ENCODE measurements at regions of chr15 and their contacts with region 1.

Region 1: GRCh38 chr15:51536965-51537574 is 85.5 kb downstream of the DMXL2 start:
- DNase-seq: no peak
- H3K4me3 ChIP-seq: no peak overlapping the region
- H3K27ac ChIP-seq: no peak overlapping the region
- H3K4me1 ChIP-seq: no peaks in the 10 kb centered on the region
- H3K27me3 ChIP-seq: no peaks in the 10 kb centered on the region
- CTCF ChIP-seq: peak; percentile 27 to 47 (median 37)
- EP300 ChIP-seq: no peak
- POLR2A ChIP-seq: no peak

Region 2: DNA sequence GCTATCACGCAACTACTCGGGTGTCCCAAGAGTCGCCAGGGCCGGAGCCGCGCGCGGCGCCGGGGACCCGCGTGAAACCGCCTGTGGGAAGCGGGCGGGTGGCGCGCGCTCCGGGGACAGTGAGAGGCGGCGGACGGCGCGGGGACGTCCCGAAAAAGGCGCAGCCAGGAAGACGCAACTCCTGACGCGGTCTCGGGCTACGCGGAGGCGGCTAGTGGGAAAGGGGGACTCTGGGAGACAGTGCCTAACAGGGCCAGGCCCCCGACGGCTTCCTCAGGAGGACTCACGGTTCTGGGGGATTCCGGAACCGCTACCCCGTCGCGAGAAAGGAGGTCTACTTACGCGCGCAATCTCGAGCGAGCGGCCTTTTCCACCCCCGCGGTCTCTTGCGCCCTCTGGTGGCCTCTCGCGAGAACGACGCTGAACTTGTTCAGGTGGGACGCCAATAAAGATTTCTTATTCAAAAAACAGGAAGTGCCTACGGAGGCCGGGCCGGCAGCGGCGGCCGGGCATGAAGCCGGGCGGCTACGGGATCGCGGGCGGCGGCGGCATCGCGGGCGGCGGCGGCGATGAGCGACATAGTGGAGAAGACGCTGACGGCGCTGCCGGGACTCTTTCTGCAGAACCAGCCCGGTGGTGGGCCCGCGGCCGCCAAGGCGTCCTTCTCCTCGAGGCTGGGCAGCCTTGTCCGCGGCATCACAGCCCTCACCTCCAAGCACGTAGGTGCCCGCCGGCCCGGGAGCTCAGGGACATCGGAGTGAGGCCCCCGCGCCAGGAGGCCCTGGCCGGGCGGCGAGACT is 628.7 kb before region 1 on chr15 and contains the start of gene AP4E1:
- intact Hi-C with region 1: no loop called
- DNase-seq: peak; percentile 99
- H3K4me3 ChIP-seq: peak within 1 kb of the TSS; percentile 76 to 99 (median 96)
- H3K27ac ChIP-seq: peak within 1 kb of the TSS; percentile 90 to 95 (median 92)
- H3K4me1 ChIP-seq: peaks cover 33 to 36% (median 34%) of the 10 kb centered on the region in 4 donors
- H3K27me3 ChIP-seq: no peaks in the 10 kb centered on the region
- CTCF ChIP-seq: peak; percentile 96 to 99 (median 96)
- EP300 ChIP-seq: no peak
- POLR2A ChIP-seq: peak; percentile 35
- total RNA-seq, gene AP4E1: 9.9 to 13.2 (median 10.6) TPM

Region 3: DNA sequence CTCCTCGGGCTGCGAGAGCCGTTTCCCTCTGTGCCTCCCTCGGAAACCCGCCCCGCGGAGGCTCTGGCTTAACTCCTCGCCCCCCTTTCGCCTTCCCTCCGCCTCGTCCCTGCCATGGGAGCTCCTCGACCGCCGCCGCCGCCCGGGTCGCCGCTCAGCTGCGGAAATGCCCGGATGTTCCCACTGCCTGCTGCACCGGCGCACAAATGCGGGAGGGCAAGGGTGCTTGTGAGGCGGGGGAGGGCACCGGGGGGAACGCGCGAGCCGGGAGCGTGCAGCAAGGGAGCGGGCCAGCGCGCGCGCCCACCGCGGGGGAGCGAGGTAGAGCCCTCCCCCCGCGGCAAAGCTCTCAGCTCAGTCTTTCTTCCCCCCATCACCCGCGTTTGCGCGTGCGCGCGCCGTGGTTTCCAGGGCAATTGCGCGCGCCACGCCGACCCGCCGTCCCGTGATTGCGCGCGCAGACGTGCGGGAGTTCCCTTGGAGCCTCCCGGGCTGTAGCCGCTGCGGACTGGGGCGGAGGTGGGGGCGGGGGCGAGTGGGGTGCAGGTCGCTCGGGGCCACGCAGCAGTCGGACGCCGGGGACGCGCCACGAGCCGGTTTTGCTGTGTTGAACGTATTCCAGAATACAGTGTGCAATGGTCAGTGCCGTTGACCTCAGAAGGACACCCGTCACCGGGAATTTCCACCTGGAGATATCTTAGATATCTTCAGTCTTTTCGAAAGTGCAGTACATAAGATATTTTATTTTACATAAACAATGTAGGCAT is 85.7 kb after region 1 on chr15 and contains the start of gene DMXL2:
- intact Hi-C with region 1: loop called (anchors 5 kb)
- DNase-seq: peak; percentile 93
- H3K4me3 ChIP-seq: peak within 1 kb of the TSS; percentile 70 to 96 (median 82)
- H3K27ac ChIP-seq: peak within 1 kb of the TSS; percentile 79 to 87 (median 83)
- H3K4me1 ChIP-seq: peaks cover 3 to 37% (median 29%) of the 10 kb centered on the region in 4 donors
- H3K27me3 ChIP-seq: no peaks in the 10 kb centered on the region
- CTCF ChIP-seq: no peak
- EP300 ChIP-seq: no peak
- POLR2A ChIP-seq: no peak
- total RNA-seq, gene DMXL2: 18.8 to 26.6 (median 19.3) TPM

Region 4: GRCh38 chr15:51992976-51993375 is 455.9 kb after region 1 on chr15:
- intact Hi-C with region 1: no loop called
- DNase-seq: no peak
- H3K4me3 ChIP-seq: no peak overlapping the region
- H3K27ac ChIP-seq: no peak overlapping the region
- H3K4me1 ChIP-seq: peaks cover 0 to 4% (median 0%) of the 10 kb centered on the region in 4 donors
- H3K27me3 ChIP-seq: no peaks in the 10 kb centered on the region
- CTCF ChIP-seq: no peak
- EP300 ChIP-seq: no peak
- POLR2A ChIP-seq: no peak